ENCODE measurements at regions of chr16 and their contacts with region 1.

Region 1: DNA sequence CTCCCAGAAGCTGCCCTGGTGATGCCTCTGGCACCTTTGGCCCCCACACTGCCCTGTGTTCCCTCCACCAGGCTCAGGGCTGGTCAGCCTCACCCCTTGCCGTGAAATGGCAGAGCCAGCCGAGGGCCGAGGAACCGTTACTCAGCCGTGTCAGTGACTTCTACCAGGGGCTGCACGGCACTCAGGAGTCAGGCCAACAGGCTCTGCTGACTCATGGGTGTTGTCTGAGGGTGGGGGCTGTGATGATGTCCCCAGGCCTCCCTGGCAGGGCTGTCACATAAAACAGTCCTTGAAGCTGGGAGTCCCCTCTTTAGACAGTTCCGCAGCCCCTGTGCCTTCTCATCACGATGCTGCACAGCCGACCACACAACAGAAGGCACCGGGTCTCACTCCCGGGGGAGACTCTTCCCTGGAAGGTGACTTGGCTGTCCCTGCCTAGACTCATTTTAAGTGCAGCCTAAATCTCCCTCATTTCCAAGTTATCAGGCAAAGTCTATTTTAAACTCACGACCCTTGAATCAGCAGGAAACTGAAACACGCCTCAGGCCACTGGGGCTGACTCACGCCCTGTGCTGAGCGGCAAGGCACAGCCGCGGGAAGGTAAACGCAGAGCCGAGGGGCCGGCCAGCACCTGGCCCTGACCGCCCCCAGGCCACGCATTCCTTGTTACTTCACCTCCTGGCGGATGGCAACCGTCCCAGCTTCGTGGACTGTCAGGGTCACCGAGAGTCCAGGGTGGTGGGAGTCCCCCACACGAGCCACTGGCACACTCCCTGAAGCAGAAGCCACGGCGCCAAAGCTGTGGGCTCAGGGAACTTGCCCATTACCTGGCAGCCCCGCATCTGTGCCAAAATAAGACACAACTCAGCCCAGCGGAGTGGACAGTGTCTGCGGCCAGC is 102.6 kb downstream of the ZNF778 start:
- DNase-seq: peak in 1 of 2 donors; percentile 82
- ATAC-seq: peak; percentile 41 to 51
- H3K4me3 ChIP-seq: peak overlapping the region; percentile 26 to 48 (median 35)
- H3K27ac ChIP-seq: peak overlapping the region; percentile 92 to 96 (median 93)
- H3K4me1 ChIP-seq: peaks cover 88 to 94% of the 10 kb centered on the region in 2 donors
- H3K27me3 ChIP-seq: no peaks in the 10 kb centered on the region
- CTCF ChIP-seq: no peak
- POLR2A ChIP-seq: no peak

Region 2: DNA sequence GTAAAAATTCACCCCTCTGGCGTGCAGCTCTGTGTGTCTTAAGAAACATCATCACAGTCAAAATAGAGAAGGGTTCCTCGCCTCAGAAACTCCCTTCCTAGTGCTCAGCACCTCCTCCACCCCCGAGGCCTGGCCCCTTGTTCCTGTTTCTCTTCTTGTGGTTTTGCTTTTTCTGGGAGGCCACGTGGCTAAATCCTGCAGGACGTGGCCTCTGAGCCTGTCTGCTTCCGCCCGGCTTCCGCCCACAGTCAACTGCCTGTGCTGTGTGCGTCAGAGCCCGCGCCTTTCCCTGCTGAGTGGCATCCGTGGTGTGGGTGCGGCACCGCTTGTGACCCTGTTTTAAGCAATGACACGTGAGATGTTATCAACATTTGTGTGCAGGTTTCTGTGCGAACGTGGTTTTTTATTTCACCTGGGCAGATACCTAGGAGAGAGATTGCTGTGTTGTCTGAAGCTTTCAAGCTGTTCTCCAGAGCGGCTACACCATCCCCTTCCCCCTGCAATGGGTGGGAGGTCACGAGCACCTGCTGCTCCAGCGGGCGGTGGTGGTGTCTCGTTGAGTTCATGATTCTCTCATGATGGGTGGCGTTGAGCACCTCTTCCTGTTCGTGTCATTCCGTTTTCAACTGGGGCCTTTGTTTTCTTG is 204.8 kb before region 1 on chr16:
- in situ Hi-C with region 1: no loop called
- intact Hi-C with region 1: no loop called
- DNase-seq: peak; percentile 40 to 51
- ATAC-seq: no peak
- H3K4me3 ChIP-seq: peak overlapping the region in 1 of 4 donors; percentile 0
- H3K27ac ChIP-seq: no peak overlapping the region
- H3K4me1 ChIP-seq: no peaks in the 10 kb centered on the region
- H3K27me3 ChIP-seq: no peaks in the 10 kb centered on the region
- CTCF ChIP-seq: no peak
- POLR2A ChIP-seq: peak in 1 of 2 donors; percentile 21

Region 3: DNA sequence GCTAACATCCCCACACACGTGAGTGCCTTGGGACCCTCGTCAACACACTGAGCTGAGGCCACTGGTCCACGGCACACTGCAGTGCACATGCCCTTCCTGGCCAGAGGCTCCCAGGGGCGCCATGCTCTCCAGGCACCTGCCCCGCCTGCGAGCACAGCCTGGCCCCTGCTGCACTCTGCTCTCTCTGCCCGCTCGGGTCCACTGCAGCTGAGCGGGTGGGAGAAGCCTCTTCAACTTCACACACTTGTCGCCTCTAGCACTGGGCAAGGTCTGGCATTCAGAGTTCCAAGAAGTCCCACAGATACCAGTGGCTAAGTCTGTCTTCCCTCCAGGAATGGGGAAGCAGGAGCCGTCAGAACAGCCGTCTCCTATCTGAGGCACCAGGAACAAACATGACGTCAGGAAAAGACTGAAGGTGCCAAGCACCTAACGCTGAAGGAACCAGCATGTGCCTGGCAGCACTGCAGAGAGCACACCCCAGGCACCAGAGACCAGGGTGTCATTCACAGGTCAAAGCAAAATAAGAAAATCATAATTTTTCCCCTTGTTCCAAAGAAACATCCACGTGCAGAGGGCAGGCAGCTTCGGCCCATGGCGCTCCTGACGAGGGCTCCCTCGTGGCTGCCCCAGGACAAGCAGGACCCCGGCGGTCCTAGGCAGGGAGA is 19.7 kb before region 1 on chr16:
- in situ Hi-C with region 1: no loop called
- intact Hi-C with region 1: loop called (anchors 2 kb)
- DNase-seq: peak; percentile 76 to 92
- ATAC-seq: peak; percentile 81 to 84
- H3K4me3 ChIP-seq: no peak overlapping the region
- H3K27ac ChIP-seq: peak overlapping the region; percentile 91 to 97 (median 92)
- H3K4me1 ChIP-seq: peaks cover 38 to 51% of the 10 kb centered on the region in 2 donors
- H3K27me3 ChIP-seq: no peaks in the 10 kb centered on the region
- CTCF ChIP-seq: no peak
- POLR2A ChIP-seq: peak; percentile 56 to 61

Measured in gastrocnemius medialis (tissue), 4 donors.